ENCODE measurements at regions of chr1 and their contacts with region 1.

Region 1: DNA sequence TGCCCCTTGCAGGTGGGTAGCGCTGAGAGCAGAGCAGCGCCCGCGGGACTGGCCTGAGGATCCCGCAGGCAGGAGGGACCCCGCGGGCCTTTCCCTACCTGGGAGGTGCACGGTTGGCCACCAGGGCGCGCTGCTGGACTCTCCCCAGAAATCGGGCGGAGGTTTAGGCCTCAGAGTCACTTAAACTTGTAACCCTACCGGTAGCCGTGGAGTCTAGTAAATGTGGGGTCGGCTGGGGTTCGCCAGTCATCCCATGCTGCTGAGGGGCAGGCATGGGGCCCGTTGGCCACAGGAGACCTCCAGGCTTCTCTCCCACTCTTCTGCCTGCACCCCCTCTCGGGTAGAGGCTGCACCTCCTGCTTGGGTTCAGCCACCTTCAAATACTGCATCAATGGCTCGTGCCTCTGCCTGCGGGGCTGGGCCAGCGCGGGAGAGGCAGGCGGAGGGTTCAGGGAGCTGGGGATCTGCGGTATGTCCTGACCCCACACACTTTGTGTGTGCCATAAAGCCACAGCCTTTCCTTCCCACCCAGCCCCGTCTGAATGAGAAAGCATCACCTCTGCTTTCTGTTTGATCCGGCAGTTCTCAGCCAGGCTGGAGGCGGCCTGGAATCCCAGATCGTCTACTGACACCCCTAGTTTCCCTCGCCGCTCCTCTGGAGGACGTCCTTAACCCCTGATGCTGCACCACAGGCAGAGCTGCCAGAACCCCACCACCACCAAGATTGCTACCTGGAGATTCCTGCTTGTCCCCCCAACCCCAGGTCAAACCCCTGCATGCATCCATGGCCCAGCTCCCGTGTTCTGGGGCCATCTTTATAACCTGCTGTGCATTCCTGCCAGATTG is 12.3 kb upstream of the GSTM4 start:
- DNase-seq: peak; percentile 74 to 94
- H3K4me3 ChIP-seq: no peak overlapping the region
- H3K4me1 ChIP-seq: peaks cover 7% of the 10 kb centered on the region
- H3K27me3 ChIP-seq: no peaks in the 10 kb centered on the region

Region 2: GRCh38 chr1:109773146-109773899 is 129.7 kb after region 1 on chr1:
- in situ Hi-C with region 1: loop called (anchors 5 kb)
- DNase-seq: peak; percentile 80 to 86
- H3K4me3 ChIP-seq: no peak overlapping the region
- H3K4me1 ChIP-seq: no peaks in the 10 kb centered on the region
- H3K27me3 ChIP-seq: no peaks in the 10 kb centered on the region

Region 3: GRCh38 chr1:109827466-109827865 is 183.9 kb after region 1 on chr1:
- in situ Hi-C with region 1: no loop called
- DNase-seq: no peak
- H3K4me3 ChIP-seq: no peak overlapping the region
- H3K4me1 ChIP-seq: peaks cover 7% of the 10 kb centered on the region; the same call in 1 of the 2 replicates
- H3K27me3 ChIP-seq: no peaks in the 10 kb centered on the region

Region 4: GRCh38 chr1:109895720-109896504 is 252.3 kb after region 1 on chr1:
- in situ Hi-C with region 1: no loop called
- DNase-seq: no peak
- H3K4me3 ChIP-seq: no peak overlapping the region
- H3K4me1 ChIP-seq: no peaks in the 10 kb centered on the region
- H3K27me3 ChIP-seq: no peaks in the 10 kb centered on the region

Measured in HAP-1 (cell line).